ENCODE measurements at regions of chr20 and their contacts with region 1.

Region 1: GRCh38 chr20:1802385-1803060 is 92.7 kb upstream of the SIRPA start:
- DNase-seq: peak; percentile 65
- H3K4me3 ChIP-seq: peak overlapping the region; percentile 79
- H3K27ac ChIP-seq: peak overlapping the region; percentile 86
- H3K4me1 ChIP-seq: peaks cover 33% of the 10 kb centered on the region
- H3K27me3 ChIP-seq: peaks cover 6% of the 10 kb centered on the region
- CTCF ChIP-seq: peak; percentile 78

Region 2: GRCh38 chr20:1912053-1912452 is 109.5 kb after region 1 on chr20:
- intact Hi-C with region 1: loop called (anchors 10 kb)
- DNase-seq: peak; percentile 56
- H3K4me3 ChIP-seq: no peak overlapping the region
- H3K27ac ChIP-seq: peak overlapping the region; percentile 65
- H3K4me1 ChIP-seq: peaks cover 37% of the 10 kb centered on the region
- H3K27me3 ChIP-seq: no peaks in the 10 kb centered on the region
- CTCF ChIP-seq: no peak

Region 3: DNA sequence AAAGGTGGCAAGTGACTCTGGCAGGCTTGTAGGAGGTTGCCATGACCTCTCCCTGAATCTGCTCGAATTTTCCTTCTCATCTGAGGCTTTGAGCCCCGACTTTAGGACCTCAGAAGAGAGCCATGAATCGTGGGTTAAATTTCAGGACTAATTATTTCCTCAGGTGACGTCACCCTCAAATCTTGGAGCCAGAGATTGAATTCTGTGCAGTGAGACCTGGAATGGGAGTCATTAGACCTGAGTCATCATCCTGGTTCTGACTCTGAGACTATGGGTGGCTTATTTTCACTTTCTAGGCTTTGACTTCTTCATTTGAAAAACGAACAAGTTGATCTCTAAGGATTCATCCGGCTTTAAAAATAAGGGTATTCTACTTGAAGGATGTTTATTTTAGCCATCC is 239.9 kb after region 1 on chr20:
- intact Hi-C with region 1: no loop called
- DNase-seq: no peak
- H3K4me3 ChIP-seq: no peak overlapping the region
- H3K27ac ChIP-seq: no peak overlapping the region
- H3K4me1 ChIP-seq: no peaks in the 10 kb centered on the region
- H3K27me3 ChIP-seq: peaks cover 39% of the 10 kb centered on the region
- CTCF ChIP-seq: no peak

Region 4: GRCh38 chr20:2637246-2637645 is 834.7 kb after region 1 on chr20:
- intact Hi-C with region 1: no loop called
- DNase-seq: no peak
- H3K4me3 ChIP-seq: no peak overlapping the region
- H3K27ac ChIP-seq: no peak overlapping the region
- H3K4me1 ChIP-seq: no peaks in the 10 kb centered on the region
- H3K27me3 ChIP-seq: peaks cover 21% of the 10 kb centered on the region
- CTCF ChIP-seq: no peak

Measured in left ventricle myocardium inferior (tissue), 1 donor.